ENCODE measurements at regions of chr4 and their contacts with region 1.

Region 1: GRCh38 chr4:68175562-68176155 is 46.0 kb upstream of the TMPRSS11F start:
- DNase-seq: peak; percentile 47 to 74 (median 50)
- ATAC-seq: peak; percentile 88
- H3K4me3 ChIP-seq: no peak overlapping the region
- H3K27ac ChIP-seq: no peak overlapping the region
- H3K4me1 ChIP-seq: no peaks in the 10 kb centered on the region
- H3K27me3 ChIP-seq: no peaks in the 10 kb centered on the region; a peak in 1 of 5 replicates
- CTCF ChIP-seq: peak; percentile 52 to 87 (median 63); a peak in 5 of 6 replicates
- EP300 ChIP-seq: no peak
- POLR2A ChIP-seq: no peak
- RAD21 ChIP-seq: peak; percentile 94 to 95

Region 2: DNA sequence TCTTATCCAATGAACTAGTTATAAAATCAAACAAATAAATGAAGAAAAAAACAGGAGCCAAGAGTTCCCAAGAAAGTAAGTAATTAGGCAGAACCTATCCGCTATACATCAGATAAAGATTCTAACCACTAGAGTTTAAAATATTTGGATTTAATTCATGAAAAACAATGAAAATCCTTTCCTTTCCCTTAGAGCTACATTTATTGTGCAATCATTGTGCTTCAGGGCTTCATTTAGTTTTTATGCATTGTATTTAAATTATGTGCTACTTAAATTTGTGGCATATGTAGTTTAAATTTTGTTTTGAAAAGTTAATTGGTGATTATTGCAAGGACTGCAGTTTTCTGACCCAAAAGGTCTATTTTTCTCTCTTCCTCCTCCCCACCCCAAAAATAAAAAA is 439.4 kb before region 1 on chr4:
- CTCF ChIA-PET with region 1: no interaction called
- POLR2A ChIA-PET with region 1: no interaction called
- in situ Hi-C with region 1: no loop called
- intact Hi-C with region 1: loop called (anchors 10 kb)
- DNase-seq: no peak
- ATAC-seq: no peak
- H3K4me3 ChIP-seq: no peak overlapping the region
- H3K27ac ChIP-seq: no peak overlapping the region
- H3K4me1 ChIP-seq: no peaks in the 10 kb centered on the region
- H3K27me3 ChIP-seq: no peaks in the 10 kb centered on the region
- CTCF ChIP-seq: no peak
- EP300 ChIP-seq: no peak
- POLR2A ChIP-seq: no peak
- RAD21 ChIP-seq: no peak

Region 3: GRCh38 chr4:67871867-67872266 is 303.8 kb before region 1 on chr4:
- CTCF ChIA-PET with region 1: interaction called, 3 read pairs
- POLR2A ChIA-PET with region 1: no interaction called
- in situ Hi-C with region 1: no loop called
- intact Hi-C with region 1: loop called (anchors 10 kb)
- DNase-seq: peak in 2 of 4 experiments; percentile 20 to 29
- ATAC-seq: peak; percentile 91
- H3K4me3 ChIP-seq: no peak overlapping the region
- H3K27ac ChIP-seq: no peak overlapping the region
- H3K4me1 ChIP-seq: no peaks in the 10 kb centered on the region
- H3K27me3 ChIP-seq: no peaks in the 10 kb centered on the region
- CTCF ChIP-seq: peak; percentile 16 to 60 (median 43); a peak in 4 of 6 replicates
- EP300 ChIP-seq: no peak
- POLR2A ChIP-seq: no peak
- RAD21 ChIP-seq: peak in 1 of 2 experiments; percentile 62; a peak in 3 of 4 replicates

Region 4: DNA sequence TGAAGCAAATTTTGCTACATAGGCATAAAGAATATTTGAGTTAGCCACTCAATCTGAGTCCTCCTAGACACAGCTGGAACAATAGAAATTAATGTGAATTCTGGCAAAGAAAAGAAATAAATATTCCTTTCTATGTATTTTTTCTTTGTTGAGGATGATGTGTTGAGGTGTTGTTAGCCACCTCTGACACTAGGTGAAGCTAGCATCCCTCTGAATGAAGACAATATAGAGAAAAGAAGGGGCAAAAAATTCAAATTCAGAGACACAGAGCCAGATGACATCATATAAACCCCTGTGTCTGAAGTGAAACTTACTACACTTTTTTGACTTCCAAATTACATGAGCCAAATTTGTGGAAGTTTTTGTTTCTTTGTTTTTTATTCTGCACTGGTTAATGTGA is 257.2 kb before region 1 on chr4:
- CTCF ChIA-PET with region 1: no interaction called
- POLR2A ChIA-PET with region 1: no interaction called
- in situ Hi-C with region 1: no loop called
- intact Hi-C with region 1: loop called (anchors 1 kb)
- DNase-seq: peak in 1 of 4 experiments; percentile 5
- ATAC-seq: peak; percentile 45; the same call in 1 of the 3 replicates
- H3K4me3 ChIP-seq: no peak overlapping the region
- H3K27ac ChIP-seq: no peak overlapping the region
- H3K4me1 ChIP-seq: no peaks in the 10 kb centered on the region
- H3K27me3 ChIP-seq: no peaks in the 10 kb centered on the region
- CTCF ChIP-seq: peak; percentile 25 to 49 (median 40); a peak in 3 of 6 replicates
- EP300 ChIP-seq: no peak
- POLR2A ChIP-seq: no peak
- RAD21 ChIP-seq: peak; percentile 55 to 79

Region 5: GRCh38 chr4:67983333-67983732 is 192.3 kb before region 1 on chr4:
- CTCF ChIA-PET with region 1: interaction called, 3 read pairs
- POLR2A ChIA-PET with region 1: no interaction called
- in situ Hi-C with region 1: loop called (anchors 10 kb)
- intact Hi-C with region 1: loop called (anchors 1 kb)
- DNase-seq: no peak
- ATAC-seq: no peak
- H3K4me3 ChIP-seq: no peak overlapping the region
- H3K27ac ChIP-seq: no peak overlapping the region
- H3K4me1 ChIP-seq: no peaks in the 10 kb centered on the region
- H3K27me3 ChIP-seq: no peaks in the 10 kb centered on the region
- CTCF ChIP-seq: no peak
- EP300 ChIP-seq: no peak
- POLR2A ChIP-seq: no peak
- RAD21 ChIP-seq: no peak

Region 6: GRCh38 chr4:67988991-67989390 is 186.7 kb before region 1 on chr4:
- CTCF ChIA-PET with region 1: interaction called, 3 read pairs
- POLR2A ChIA-PET with region 1: no interaction called
- in situ Hi-C with region 1: loop called (anchors 10 kb)
- intact Hi-C with region 1: loop called (anchors 1 kb)
- DNase-seq: no peak
- ATAC-seq: no peak
- H3K4me3 ChIP-seq: no peak overlapping the region
- H3K27ac ChIP-seq: no peak overlapping the region
- H3K4me1 ChIP-seq: no peaks in the 10 kb centered on the region
- H3K27me3 ChIP-seq: no peaks in the 10 kb centered on the region
- CTCF ChIP-seq: no peak
- EP300 ChIP-seq: no peak
- POLR2A ChIP-seq: no peak
- RAD21 ChIP-seq: no peak

Region 7: DNA sequence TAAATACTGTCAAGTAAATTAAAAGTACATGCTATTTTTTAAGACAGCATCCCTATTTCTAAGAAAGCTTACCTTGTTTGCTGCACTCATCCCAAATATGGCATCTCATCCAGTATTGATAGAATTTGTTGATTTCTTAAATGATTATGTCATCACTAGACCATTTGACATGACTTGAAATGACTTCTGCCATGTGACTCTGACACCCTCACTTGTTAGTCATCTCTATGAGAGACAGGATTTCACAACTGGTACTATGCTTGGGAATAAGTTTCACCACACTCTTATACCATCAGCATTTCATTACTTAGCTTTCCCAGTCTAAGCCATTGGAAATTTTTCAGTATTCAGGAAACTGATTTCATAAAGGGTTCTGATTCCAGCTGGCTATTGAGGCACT is 101.3 kb before region 1 on chr4:
- CTCF ChIA-PET with region 1: interaction called, 4 read pairs
- POLR2A ChIA-PET with region 1: interaction called, 3 read pairs
- in situ Hi-C with region 1: no loop called
- intact Hi-C with region 1: loop called (anchors 5 kb)
- DNase-seq: no peak
- ATAC-seq: no peak
- H3K4me3 ChIP-seq: no peak overlapping the region
- H3K27ac ChIP-seq: no peak overlapping the region
- H3K4me1 ChIP-seq: no peaks in the 10 kb centered on the region
- H3K27me3 ChIP-seq: no peaks in the 10 kb centered on the region
- CTCF ChIP-seq: no peak
- EP300 ChIP-seq: no peak
- POLR2A ChIP-seq: no peak
- RAD21 ChIP-seq: no peak

Region 8: GRCh38 chr4:68299492-68300457 is 124.1 kb after region 1 on chr4:
- CTCF ChIA-PET with region 1: no interaction called
- POLR2A ChIA-PET with region 1: no interaction called
- in situ Hi-C with region 1: no loop called
- intact Hi-C with region 1: no loop called
- DNase-seq: no peak
- ATAC-seq: no peak
- H3K4me3 ChIP-seq: no peak overlapping the region
- H3K27ac ChIP-seq: no peak overlapping the region
- H3K4me1 ChIP-seq: no peaks in the 10 kb centered on the region
- H3K27me3 ChIP-seq: no peaks in the 10 kb centered on the region
- CTCF ChIP-seq: no peak
- EP300 ChIP-seq: no peak
- POLR2A ChIP-seq: no peak
- RAD21 ChIP-seq: no peak

Measured in K562 (cell line).